Activated naive CD4-positive, alpha-beta T cell treated with anti-CD3 and anti-CD28 coated beads for 36 hours (primary cell): ENCODE measurements at regions of chr15 and their contacts with region 1.

Region 1: DNA sequence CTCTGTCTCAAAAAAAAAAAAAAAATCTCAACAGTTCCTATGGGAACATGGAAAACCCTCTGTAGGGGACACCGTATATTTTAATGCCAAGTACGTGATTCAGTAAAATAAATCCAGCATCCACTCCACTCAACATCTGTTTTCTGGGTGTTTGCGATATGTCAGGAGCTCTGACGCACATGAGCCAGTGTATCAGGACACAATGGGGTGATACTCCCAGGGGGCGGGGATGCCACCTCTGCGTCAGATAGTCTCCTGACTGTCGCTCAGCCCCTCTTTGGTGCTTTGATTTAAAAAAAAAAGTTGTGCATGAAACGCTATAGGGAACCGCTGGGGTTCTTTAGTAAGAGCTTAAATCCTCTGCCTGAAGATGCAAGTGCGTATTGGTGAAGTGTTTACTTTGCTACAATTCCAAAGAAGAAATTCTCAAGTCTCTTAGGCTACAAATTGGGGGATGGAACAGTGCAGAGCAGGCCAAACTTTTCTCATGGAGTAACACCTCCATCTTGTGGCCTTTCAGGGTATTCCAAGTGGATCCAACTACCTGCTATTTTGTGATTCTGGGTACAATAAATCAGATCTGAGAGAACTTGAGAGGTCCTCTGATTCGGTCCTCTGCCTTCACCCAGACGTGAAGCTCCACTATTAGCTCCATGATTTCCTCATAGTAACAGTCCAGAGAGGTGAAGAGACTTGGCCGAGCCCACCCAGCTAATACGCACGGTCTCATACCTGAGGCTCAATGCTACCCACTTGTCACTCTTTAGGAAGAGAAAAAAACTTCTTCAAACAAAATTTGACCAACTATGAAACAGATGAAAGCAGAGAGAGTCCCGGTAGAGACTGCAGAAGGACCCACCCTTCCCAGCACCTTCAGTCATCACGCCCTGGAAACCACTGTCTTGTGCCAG is 9.3 kb upstream of the NR2E3 start:
- DNase-seq: peak; percentile 35
- H3K4me3 Mint-ChIP-seq: no peak overlapping the region
- H3K27ac Mint-ChIP-seq: no peak overlapping the region
- H3K4me1 Mint-ChIP-seq: no peaks in the 10 kb centered on the region
- H3K27me3 Mint-ChIP-seq: peaks cover 15% of the 10 kb centered on the region

Region 2: GRCh38 chr15:71448688-71449114 is 352.4 kb before region 1 on chr15:
- CTCF ChIA-PET with region 1: interaction called, 4 read pairs
- intact Hi-C with region 1: loop called (anchors 2 kb)
- DNase-seq: peak; percentile 8
- H3K4me3 Mint-ChIP-seq: no peak overlapping the region
- H3K27ac Mint-ChIP-seq: no peak overlapping the region
- H3K4me1 Mint-ChIP-seq: no peaks in the 10 kb centered on the region
- H3K27me3 Mint-ChIP-seq: peaks cover 12% of the 10 kb centered on the region

Region 3: GRCh38 chr15:71660501-71660900 is 140.6 kb before region 1 on chr15:
- CTCF ChIA-PET with region 1: no interaction called
- intact Hi-C with region 1: no loop called
- DNase-seq: no peak
- H3K4me3 Mint-ChIP-seq: no peak overlapping the region
- H3K27ac Mint-ChIP-seq: no peak overlapping the region
- H3K4me1 Mint-ChIP-seq: no peaks in the 10 kb centered on the region
- H3K27me3 Mint-ChIP-seq: peaks cover 15% of the 10 kb centered on the region

Region 4: GRCh38 chr15:71743861-71744382 is 57.2 kb before region 1 on chr15:
- CTCF ChIA-PET with region 1: interaction called, 8 read pairs
- intact Hi-C with region 1: loop called (anchors 2 kb)
- DNase-seq: peak; percentile 74
- H3K4me3 Mint-ChIP-seq: no peak overlapping the region
- H3K27ac Mint-ChIP-seq: no peak overlapping the region
- H3K4me1 Mint-ChIP-seq: no peaks in the 10 kb centered on the region
- H3K27me3 Mint-ChIP-seq: peaks cover 2% of the 10 kb centered on the region

Region 5: DNA sequence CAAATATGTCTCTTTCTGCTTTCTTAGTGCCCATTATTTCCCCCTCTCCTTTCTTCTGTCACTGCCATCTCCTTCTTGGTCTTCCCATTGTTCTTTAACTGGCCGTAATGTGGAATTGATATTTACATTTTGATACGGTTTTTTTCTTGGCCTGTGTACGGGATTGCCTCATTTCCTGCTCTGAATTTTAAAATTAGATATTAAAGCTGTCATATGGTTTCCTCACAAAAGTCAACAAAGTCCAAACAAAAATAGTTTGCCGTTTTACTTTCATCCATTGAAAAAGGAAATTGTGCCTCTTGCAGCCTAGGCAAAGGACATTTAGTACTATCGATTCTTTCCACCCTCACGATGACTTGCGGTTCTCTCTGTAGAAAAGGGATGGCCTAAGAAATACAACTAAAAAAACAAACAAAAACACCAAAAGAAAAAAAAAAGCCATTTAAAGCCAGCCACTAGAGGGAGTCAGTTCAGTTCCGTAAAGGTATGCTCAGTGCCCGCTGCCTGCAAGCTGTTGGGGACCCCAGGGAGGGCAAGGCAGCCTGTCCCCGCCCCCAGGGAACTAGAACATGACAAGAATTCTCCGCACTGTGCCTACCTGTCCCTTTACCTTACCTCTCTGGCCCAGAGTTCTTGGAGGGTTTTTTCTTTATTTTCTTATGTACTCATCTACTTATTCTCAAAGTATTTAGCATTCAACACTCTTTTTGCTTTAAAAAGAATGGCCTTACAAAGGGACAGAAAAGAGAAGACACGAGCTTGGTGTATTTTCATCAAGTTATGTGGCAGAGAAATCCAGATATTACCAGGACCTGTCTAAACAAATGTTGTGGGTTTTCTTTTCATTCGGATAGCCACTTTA is 20.7 kb before region 1 on chr15:
- CTCF ChIA-PET with region 1: interaction called, 10 read pairs
- intact Hi-C with region 1: no loop called
- DNase-seq: peak; percentile 25
- H3K4me3 Mint-ChIP-seq: no peak overlapping the region
- H3K27ac Mint-ChIP-seq: no peak overlapping the region
- H3K4me1 Mint-ChIP-seq: no peaks in the 10 kb centered on the region
- H3K27me3 Mint-ChIP-seq: peaks cover 10% of the 10 kb centered on the region